Activated naive CD4-positive, alpha-beta T cell treated with anti-CD3 and anti-CD28 coated beads for 36 hours (primary cell): ENCODE measurements at regions of chr2 and their contacts with region 1.

Region 1: DNA sequence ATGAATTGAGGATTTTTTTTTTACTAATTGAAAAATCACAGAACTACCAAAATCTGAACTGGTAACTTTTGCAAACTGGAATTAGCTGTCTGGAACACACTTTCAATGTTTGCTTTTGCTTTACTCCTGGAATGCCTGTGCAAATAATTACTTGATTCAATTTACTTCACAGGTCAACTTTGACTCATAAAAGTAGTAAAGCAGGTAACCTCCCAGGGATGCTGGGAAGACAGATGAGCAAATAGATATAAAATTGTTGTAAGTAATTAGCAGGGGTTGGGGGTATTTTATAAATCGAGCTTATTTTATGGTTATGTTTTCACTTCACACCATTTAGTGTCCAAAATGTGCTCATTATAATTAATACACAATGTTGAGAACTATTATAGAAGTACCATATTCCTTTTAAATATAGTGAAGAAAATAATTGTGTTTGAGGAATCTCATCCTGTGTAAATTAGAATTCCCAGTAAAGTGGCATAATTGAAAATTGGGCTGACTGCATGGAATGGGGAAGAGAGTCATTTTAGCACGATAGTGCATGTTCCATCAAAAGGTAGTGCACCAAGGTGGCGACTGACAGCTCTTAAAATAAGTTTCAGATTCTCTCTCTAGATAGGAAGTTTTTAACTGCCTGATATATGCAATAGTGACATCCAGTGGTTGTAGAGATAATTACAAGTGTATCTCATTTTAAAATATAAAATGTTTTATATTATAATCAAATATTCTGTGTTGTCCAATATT is 398.1 kb upstream of the HNRNPA3 start:
- DNase-seq: peak; percentile 19
- H3K4me3 Mint-ChIP-seq: no peak overlapping the region
- H3K27ac Mint-ChIP-seq: no peak overlapping the region
- H3K4me1 Mint-ChIP-seq: peaks cover 12% of the 10 kb centered on the region
- H3K27me3 Mint-ChIP-seq: no peaks in the 10 kb centered on the region

Region 2: GRCh38 chr2:176454893-176455811 is 359.3 kb before region 1 on chr2:
- CTCF ChIA-PET with region 1: interaction called, 4 read pairs
- intact Hi-C with region 1: loop called (anchors 5 kb)
- DNase-seq: peak; percentile 92
- H3K4me3 Mint-ChIP-seq: no peak overlapping the region
- H3K27ac Mint-ChIP-seq: no peak overlapping the region
- H3K4me1 Mint-ChIP-seq: peaks cover 2% of the 10 kb centered on the region
- H3K27me3 Mint-ChIP-seq: peaks cover 37% of the 10 kb centered on the region

Region 3: GRCh38 chr2:176638167-176639015 is 176.1 kb before region 1 on chr2:
- CTCF ChIA-PET with region 1: no interaction called
- intact Hi-C with region 1: loop called (anchors 1 kb)
- DNase-seq: peak; percentile 69
- H3K4me3 Mint-ChIP-seq: peak overlapping the region; percentile 62
- H3K27ac Mint-ChIP-seq: no peak overlapping the region
- H3K4me1 Mint-ChIP-seq: peaks cover 2% of the 10 kb centered on the region
- H3K27me3 Mint-ChIP-seq: peaks cover 52% of the 10 kb centered on the region

Region 4: DNA sequence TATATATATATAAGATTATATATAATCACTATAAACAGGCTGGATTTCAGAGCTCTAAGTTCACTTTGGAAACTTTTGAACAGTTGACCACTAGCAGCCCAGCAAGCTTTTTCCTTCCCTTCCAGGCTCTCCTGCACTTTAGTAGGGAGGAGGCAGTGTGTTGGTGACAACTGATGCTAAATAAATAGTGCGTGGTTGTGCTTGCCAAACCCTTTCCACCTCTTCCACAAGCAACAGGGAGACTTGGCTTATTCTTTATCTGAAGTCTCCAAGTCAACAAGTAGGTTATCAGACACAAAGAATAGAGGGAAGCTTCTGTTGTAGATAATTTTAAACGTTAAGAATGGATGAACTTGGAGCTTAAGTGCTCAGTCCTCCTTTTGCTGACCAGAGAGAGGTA is 10.1 kb before region 1 on chr2:
- CTCF ChIA-PET with region 1: interaction called, 13 read pairs
- intact Hi-C with region 1: no loop called
- DNase-seq: no peak
- H3K4me3 Mint-ChIP-seq: no peak overlapping the region
- H3K27ac Mint-ChIP-seq: no peak overlapping the region
- H3K4me1 Mint-ChIP-seq: no peaks in the 10 kb centered on the region
- H3K27me3 Mint-ChIP-seq: no peaks in the 10 kb centered on the region

Region 5: GRCh38 chr2:176852667-176853066 is 38.2 kb after region 1 on chr2:
- CTCF ChIA-PET with region 1: interaction called, 3 read pairs
- intact Hi-C with region 1: loop called (anchors 2 kb)
- DNase-seq: peak; percentile 28
- H3K4me3 Mint-ChIP-seq: no peak overlapping the region
- H3K27ac Mint-ChIP-seq: no peak overlapping the region
- H3K4me1 Mint-ChIP-seq: peaks cover 29% of the 10 kb centered on the region
- H3K27me3 Mint-ChIP-seq: no peaks in the 10 kb centered on the region